ENCODE measurements at regions of chr1 and their contacts with region 1.

Region 1: GRCh38 chr1:85387781-85388180 is 77.2 kb downstream of the DDAH1 start:
- DNase-seq: no peak

Region 2: DNA sequence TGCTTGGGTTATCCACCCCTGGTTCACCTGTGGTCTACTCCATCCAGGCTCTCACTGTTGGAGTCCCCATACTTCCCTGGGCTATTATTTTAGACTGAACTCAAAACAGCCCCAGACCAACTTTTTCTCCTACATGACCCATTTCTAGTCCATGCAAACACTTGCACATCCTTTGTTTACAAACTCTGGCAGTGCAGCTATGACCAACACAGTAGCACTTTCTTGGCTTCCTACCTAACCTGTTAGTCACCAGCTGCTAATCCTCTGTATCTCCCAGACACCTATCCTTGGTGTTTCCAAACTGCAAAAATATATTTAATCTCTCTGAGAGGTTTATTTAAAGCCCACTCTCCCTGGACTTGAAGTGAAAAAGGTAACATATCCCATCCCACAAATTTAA is 13.6 kb before region 1 on chr1:
- CTCF ChIA-PET with region 1: no interaction called
- POLR2A ChIA-PET with region 1: no interaction called
- DNase-seq: no peak

Region 3: GRCh38 chr1:85452948-85453347 is 65.2 kb after region 1 on chr1:
- CTCF ChIA-PET with region 1: interaction called, 10 read pairs
- POLR2A ChIA-PET with region 1: no interaction called
- DNase-seq: no peak

Measured in HEK293T (cell line).